PC-3 (cell line): ENCODE measurements at regions of chr2 and their contacts with region 1.

Region 1: DNA sequence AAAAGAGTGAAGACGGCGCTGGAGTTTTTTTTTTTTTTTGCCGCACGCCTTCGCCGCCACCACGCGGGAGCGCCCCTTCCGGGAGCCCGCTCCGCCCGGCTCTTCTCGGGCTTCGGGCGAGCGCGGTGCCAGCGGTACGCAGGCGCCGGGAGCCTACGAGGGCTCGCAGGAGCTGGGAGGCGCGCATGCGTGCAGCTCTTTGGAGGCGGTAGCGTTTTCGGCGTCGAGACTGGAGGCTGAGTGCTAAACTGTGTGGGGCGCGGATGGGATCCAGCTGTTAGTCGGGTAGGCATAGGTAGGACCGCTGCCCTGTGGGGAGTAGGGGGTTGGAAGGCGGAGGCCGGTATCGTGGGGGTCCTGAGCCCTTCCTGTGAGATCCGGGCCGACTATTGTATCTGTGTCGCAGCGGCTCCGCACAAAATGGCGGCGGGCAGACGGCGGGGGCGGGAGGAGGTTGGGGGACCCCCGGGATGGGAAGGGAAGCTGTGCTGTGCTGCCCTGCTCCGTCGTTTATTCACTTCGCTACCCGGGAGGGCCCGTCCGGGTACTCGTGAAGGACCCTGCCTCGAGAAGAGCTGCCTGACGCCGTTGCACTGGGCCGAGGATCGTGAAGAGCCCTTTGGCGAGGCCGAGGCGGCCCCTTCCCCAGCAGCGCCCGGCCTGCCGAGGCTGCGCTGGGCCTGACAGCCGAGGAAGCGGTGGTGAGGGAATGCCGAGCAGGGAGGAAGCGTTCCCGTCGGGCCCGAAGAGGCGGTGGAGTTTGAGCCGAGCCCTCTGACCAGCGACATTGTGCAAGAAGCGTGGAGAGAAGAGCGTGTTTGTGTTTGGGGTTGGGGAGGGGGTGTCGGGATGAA is at the start of gene ZNF638:
- DNase-seq: peak; percentile 96
- ATAC-seq: peak; percentile 95
- H3K4me3 ChIP-seq: peak within 1 kb of the TSS; percentile 88
- H3K27ac ChIP-seq: peak within 1 kb of the TSS; percentile 48
- H3K4me1 ChIP-seq: peaks cover 29% of the 10 kb centered on the region
- H3K27me3 ChIP-seq: no peaks in the 10 kb centered on the region
- CTCF ChIP-seq: peak; percentile 70
- total RNA-seq, gene ZNF638: 82.9 and 93.2 TPM in 2 replicates

Region 2: DNA sequence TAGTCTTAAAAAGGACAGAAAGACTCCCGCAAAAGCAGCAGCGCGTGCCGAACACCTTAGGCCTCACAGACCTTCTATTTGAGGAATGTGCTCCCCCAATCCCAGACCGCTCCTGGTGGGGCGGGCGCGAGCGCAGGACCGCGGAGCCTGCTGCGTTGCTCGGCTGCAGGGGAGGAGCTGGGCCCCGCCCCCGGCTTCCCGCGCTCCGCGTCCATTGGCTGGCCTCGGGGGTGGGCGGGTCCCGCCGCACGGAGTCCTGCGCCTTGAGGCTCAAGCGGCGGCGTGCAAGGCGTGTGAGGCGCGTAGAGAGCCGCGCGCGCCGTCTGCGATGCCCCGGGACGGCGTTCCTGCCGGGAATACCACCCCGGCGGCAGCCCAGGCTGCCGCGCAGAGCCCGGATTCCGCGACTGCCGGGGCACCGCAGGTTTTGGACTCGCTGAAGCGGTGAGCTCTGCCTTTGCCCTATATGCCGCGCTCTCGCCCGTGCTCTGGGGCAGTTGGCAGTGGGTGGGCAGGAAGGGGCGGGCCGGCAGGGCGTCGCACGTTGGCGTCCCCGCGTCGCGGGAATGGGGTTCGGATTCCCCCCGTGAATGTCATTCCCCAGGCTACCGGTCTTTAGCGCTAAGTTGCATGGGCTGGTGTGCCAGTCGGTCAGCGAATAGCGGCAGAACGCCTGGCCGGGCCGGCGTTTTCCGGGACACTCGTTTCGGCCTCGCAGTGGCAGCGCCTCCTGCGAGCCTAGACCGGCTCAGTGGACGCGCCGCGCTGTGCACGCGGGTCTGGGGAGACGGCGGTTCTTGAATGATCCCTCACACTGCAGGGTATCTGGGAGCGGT is 55.3 kb before region 1 on chr2:
- CTCF ChIA-PET with region 1: no interaction called
- POLR2A ChIA-PET with region 1: no interaction called
- intact Hi-C with region 1: loop called (anchors 2 kb)
- DNase-seq: peak; percentile 96
- ATAC-seq: peak; percentile 91
- H3K4me3 ChIP-seq: peak overlapping the region; percentile 76
- H3K27ac ChIP-seq: no peak overlapping the region
- H3K4me1 ChIP-seq: peaks cover 23% of the 10 kb centered on the region
- H3K27me3 ChIP-seq: no peaks in the 10 kb centered on the region
- CTCF ChIP-seq: no peak

Region 3: GRCh38 chr2:71299507-71299906 is 32.3 kb before region 1 on chr2:
- CTCF ChIA-PET with region 1: interaction called, 29 read pairs
- POLR2A ChIA-PET with region 1: interaction called, 23 read pairs
- intact Hi-C with region 1: loop called (anchors 1 kb)
- DNase-seq: peak; percentile 71
- ATAC-seq: no peak
- H3K4me3 ChIP-seq: no peak overlapping the region
- H3K27ac ChIP-seq: no peak overlapping the region
- H3K4me1 ChIP-seq: no peaks in the 10 kb centered on the region
- H3K27me3 ChIP-seq: no peaks in the 10 kb centered on the region
- CTCF ChIP-seq: peak; percentile 79

Region 4: DNA sequence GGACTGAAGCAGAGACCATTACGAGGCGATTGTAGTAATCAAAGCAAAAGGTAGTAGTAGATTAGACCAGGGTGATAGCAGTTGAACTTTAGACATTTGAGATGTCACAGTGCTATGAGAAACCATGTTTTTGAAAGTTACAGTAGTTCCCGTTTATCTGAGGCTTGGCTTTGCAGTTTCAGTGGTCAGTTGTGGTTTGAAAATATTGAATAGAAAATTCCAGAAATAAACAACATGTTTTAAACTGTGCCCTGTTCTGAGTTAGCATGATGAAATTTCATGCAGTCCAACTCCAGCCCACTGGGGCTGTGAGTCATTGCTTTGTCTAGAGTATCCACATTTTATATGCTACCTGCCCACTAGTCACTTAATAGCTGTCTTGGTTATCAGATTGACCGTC is 47.3 kb after region 1 on chr2:
- CTCF ChIA-PET with region 1: interaction called, 12 read pairs
- POLR2A ChIA-PET with region 1: no interaction called
- intact Hi-C with region 1: no loop called
- DNase-seq: peak; percentile 62
- ATAC-seq: peak; percentile 92
- H3K4me3 ChIP-seq: no peak overlapping the region
- H3K27ac ChIP-seq: no peak overlapping the region
- H3K4me1 ChIP-seq: peaks cover 9% of the 10 kb centered on the region
- H3K27me3 ChIP-seq: no peaks in the 10 kb centered on the region
- CTCF ChIP-seq: no peak

Region 5: DNA sequence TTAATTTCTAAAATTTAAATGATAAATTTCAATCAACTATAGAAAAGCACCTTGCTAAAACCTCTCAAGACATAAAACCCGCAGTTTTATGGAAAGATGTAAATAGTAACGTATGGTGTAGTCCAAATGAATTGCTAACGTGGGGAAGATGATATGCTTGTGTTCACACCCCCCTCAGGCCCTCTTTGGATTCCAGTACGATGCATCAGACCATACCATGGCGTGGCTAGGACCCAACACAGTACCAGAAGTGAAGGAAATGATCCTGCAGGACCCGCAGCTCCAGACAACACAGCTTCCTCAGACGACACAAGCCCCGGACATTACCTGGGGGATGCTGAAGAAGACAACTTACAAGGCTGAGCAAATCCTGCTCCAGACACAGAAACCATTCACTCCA is 61.4 kb after region 1 on chr2:
- CTCF ChIA-PET with region 1: no interaction called
- POLR2A ChIA-PET with region 1: interaction called, 24 read pairs
- intact Hi-C with region 1: no loop called
- DNase-seq: no peak
- ATAC-seq: no peak
- H3K4me3 ChIP-seq: no peak overlapping the region
- H3K27ac ChIP-seq: no peak overlapping the region
- H3K4me1 ChIP-seq: no peaks in the 10 kb centered on the region
- H3K27me3 ChIP-seq: no peaks in the 10 kb centered on the region
- CTCF ChIP-seq: no peak

Region 6: GRCh38 chr2:71603311-71603811 is 271.6 kb after region 1 on chr2:
- CTCF ChIA-PET with region 1: no interaction called
- POLR2A ChIA-PET with region 1: no interaction called
- intact Hi-C with region 1: no loop called
- DNase-seq: no peak
- ATAC-seq: no peak
- H3K4me3 ChIP-seq: no peak overlapping the region
- H3K27ac ChIP-seq: no peak overlapping the region
- H3K4me1 ChIP-seq: no peaks in the 10 kb centered on the region
- H3K27me3 ChIP-seq: no peaks in the 10 kb centered on the region
- CTCF ChIP-seq: no peak